PC-3 (cell line): ENCODE measurements at regions of chr17 and their contacts with region 1.

Region 1: DNA sequence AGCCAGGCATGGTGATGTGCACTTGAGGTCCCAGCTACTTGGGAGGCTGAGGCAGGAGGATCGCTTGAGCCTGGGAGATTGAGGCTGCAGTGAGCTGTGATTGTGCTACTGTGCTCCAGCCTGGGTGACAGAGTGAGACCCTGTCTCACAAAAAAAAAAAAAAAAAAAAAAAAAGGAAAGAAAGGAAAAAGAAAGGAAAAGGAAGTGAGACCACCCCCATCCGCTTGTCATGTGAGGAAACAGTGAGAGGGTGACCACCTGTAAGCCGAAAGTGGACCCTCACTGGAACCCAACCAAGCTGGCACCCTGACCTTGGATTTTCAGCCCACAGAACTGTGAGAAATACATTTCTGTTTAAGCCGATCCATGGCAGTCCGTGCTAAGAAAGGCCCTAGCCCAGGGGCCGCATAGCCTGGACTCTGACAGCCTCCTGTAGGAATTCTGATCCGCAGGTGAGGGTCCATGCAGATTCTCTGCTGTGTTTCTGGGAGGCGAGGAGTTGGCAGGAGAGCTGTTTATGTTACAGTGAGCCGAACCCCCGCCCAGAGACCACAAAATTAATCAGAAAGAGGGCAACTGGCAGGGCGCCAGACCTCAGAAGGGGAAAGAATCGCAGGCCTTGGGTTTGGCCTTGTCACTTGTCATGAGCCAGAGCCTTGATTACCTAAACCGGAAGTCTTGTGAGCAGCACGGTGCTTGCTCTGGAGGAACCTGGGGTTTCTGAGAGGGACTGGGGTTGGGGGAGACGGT is 945 bp downstream of the SGSH start:
- DNase-seq: peak; percentile 90
- ATAC-seq: peak; percentile 48
- H3K4me3 ChIP-seq: peak overlapping the region; percentile 82
- H3K27ac ChIP-seq: peak overlapping the region; percentile 31
- H3K4me1 ChIP-seq: peaks cover 20% of the 10 kb centered on the region
- H3K27me3 ChIP-seq: no peaks in the 10 kb centered on the region
- CTCF ChIP-seq: no peak

Region 2: GRCh38 chr17:80147035-80147836 is 72.0 kb before region 1 on chr17 and contains the start of gene EIF4A3:
- CTCF ChIA-PET with region 1: no interaction called
- POLR2A ChIA-PET with region 1: no interaction called
- intact Hi-C with region 1: loop called (anchors 1 kb)
- DNase-seq: peak; percentile 100
- ATAC-seq: peak; percentile 91
- H3K4me3 ChIP-seq: peak within 1 kb of the TSS; percentile 91
- H3K27ac ChIP-seq: peak within 1 kb of the TSS; percentile 62
- H3K4me1 ChIP-seq: peaks cover 12% of the 10 kb centered on the region
- H3K27me3 ChIP-seq: no peaks in the 10 kb centered on the region
- CTCF ChIP-seq: no peak
- total RNA-seq, gene EIF4A3: 167 and 185 TPM in 2 replicates

Region 3: DNA sequence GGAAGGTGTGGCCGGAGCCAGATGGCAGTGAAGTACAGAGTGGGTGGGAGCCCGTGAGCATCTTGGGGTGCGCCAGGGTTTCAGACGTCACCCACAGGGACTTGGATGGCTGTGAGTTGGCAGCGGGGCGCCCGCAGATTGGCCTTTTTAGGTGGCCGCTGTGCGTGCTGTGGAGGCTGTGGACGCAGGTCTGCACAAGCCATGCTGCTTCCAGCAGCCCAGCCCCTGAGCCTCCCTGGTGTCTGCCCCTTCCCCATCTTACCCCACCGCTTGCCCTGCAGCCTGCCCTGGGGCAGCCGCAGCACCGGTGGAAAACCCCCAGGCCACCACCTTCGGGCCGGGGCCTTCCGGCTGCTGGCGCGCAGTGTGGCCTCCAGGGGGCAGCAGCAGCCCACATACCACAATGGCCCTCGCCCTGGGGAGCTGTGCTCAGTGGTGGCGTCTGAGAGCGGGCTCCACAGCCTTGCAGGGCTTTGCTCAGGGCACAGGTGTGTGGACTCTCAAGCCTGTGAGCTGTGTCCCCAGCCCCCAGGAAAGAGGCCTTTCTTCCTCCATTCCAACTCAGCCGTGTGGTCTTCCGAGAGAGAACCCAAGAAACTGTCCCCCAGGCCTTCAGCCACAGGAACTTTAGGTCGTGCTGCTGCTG is 207.6 kb after region 1 on chr17:
- CTCF ChIA-PET with region 1: no interaction called
- POLR2A ChIA-PET with region 1: no interaction called
- intact Hi-C with region 1: no loop called
- DNase-seq: peak; percentile 82
- ATAC-seq: peak; percentile 86
- H3K4me3 ChIP-seq: no peak overlapping the region
- H3K27ac ChIP-seq: no peak overlapping the region
- H3K4me1 ChIP-seq: no peaks in the 10 kb centered on the region; the same call in 1 of the 2 replicates
- H3K27me3 ChIP-seq: no peaks in the 10 kb centered on the region
- CTCF ChIP-seq: peak; percentile 99